ENCODE measurements at regions of chr17 and their contacts with region 1.

Region 1: GRCh38 chr17:46108550-46109110 is 84.6 kb downstream of the KANSL1 start:
- DNase-seq: no peak
- ATAC-seq: peak in 2 of 3 donors; percentile 44 to 69
- H3K4me3 ChIP-seq: no peak overlapping the region
- H3K4me3 Mint-ChIP-seq: no peak overlapping the region
- H3K27ac ChIP-seq: no peak overlapping the region
- H3K27ac Mint-ChIP-seq: peak overlapping the region; percentile 32 to 59
- H3K4me1 ChIP-seq: peaks cover 16% of the 10 kb centered on the region
- H3K4me1 Mint-ChIP-seq: peaks cover 86 to 90% of the 10 kb centered on the region in 2 donors
- H3K27me3 ChIP-seq: no peaks in the 10 kb centered on the region
- H3K27me3 Mint-ChIP-seq: no peaks in the 10 kb centered on the region
- CTCF ChIP-seq: no peak

Region 2: GRCh38 chr17:46139432-46140210 is 31.0 kb after region 1 on chr17:
- intact Hi-C with region 1: loop called (anchors 5 kb)
- DNase-seq: no peak
- ATAC-seq: no peak
- H3K4me3 ChIP-seq: no peak overlapping the region
- H3K4me3 Mint-ChIP-seq: peak overlapping the region; percentile 26
- H3K27ac ChIP-seq: no peak overlapping the region
- H3K27ac Mint-ChIP-seq: peak overlapping the region; percentile 32 to 71
- H3K4me1 ChIP-seq: peaks cover 11% of the 10 kb centered on the region
- H3K4me1 Mint-ChIP-seq: peaks cover 82 to 92% of the 10 kb centered on the region in 2 donors
- H3K27me3 ChIP-seq: no peaks in the 10 kb centered on the region
- H3K27me3 Mint-ChIP-seq: no peaks in the 10 kb centered on the region
- CTCF ChIP-seq: no peak

Region 3: GRCh38 chr17:46179375-46179999 is 70.9 kb after region 1 on chr17:
- intact Hi-C with region 1: loop called (anchors 10 kb)
- DNase-seq: no peak
- ATAC-seq: peak; percentile 58 to 72 (median 69)
- H3K4me3 ChIP-seq: no peak overlapping the region
- H3K4me3 Mint-ChIP-seq: peak overlapping the region; percentile 74
- H3K27ac ChIP-seq: peak overlapping the region; percentile 19
- H3K27ac Mint-ChIP-seq: peak overlapping the region; percentile 79 to 80
- H3K4me1 ChIP-seq: peaks cover 45% of the 10 kb centered on the region
- H3K4me1 Mint-ChIP-seq: peaks cover 77 to 79% of the 10 kb centered on the region in 2 donors
- H3K27me3 ChIP-seq: no peaks in the 10 kb centered on the region
- H3K27me3 Mint-ChIP-seq: no peaks in the 10 kb centered on the region
- CTCF ChIP-seq: no peak